Activated B cell treated with CpG ODN at 0.5 μM for 24 hours (primary cell): ENCODE measurements at regions of chr11 and their contacts with region 1.

Region 1: GRCh38 chr11:60831143-60831500 is 10.8 kb upstream of the CCDC86 start:
- DNase-seq: peak; percentile 69
- ATAC-seq: peak; percentile 95
- H3K4me3 Mint-ChIP-seq: no peak overlapping the region
- H3K27ac Mint-ChIP-seq: no peak overlapping the region
- H3K4me1 Mint-ChIP-seq: peaks cover 5% of the 10 kb centered on the region
- H3K27me3 Mint-ChIP-seq: peaks cover 8% of the 10 kb centered on the region
- CTCF ChIP-seq: peak; percentile 54

Region 2: GRCh38 chr11:60841797-60842667 is 10.9 kb after region 1 on chr11 and contains the start of gene CCDC86:
- CTCF ChIA-PET with region 1: interaction called, 14 read pairs
- POLR2A ChIA-PET with region 1: no interaction called
- intact Hi-C with region 1: no loop called
- DNase-seq: peak; percentile 100
- ATAC-seq: peak; percentile 96
- H3K4me3 Mint-ChIP-seq: peak within 1 kb of the TSS; percentile 83
- H3K27ac Mint-ChIP-seq: peak within 1 kb of the TSS; percentile 85
- H3K4me1 Mint-ChIP-seq: peaks cover 41% of the 10 kb centered on the region
- H3K27me3 Mint-ChIP-seq: no peaks in the 10 kb centered on the region
- CTCF ChIP-seq: no peak
- total RNA-seq, gene CCDC86: 30.3 and 30.6 TPM in 2 replicates

Region 3: GRCh38 chr11:60899046-60899936 is 68.2 kb after region 1 on chr11:
- CTCF ChIA-PET with region 1: interaction called, 34 read pairs
- POLR2A ChIA-PET with region 1: interaction called, 4 read pairs
- intact Hi-C with region 1: loop called (anchors 1 kb)
- DNase-seq: no peak
- ATAC-seq: peak; percentile 90
- H3K4me3 Mint-ChIP-seq: no peak overlapping the region
- H3K27ac Mint-ChIP-seq: no peak overlapping the region
- H3K4me1 Mint-ChIP-seq: peaks cover 10% of the 10 kb centered on the region
- H3K27me3 Mint-ChIP-seq: no peaks in the 10 kb centered on the region
- CTCF ChIP-seq: peak; percentile 95

Region 4: DNA sequence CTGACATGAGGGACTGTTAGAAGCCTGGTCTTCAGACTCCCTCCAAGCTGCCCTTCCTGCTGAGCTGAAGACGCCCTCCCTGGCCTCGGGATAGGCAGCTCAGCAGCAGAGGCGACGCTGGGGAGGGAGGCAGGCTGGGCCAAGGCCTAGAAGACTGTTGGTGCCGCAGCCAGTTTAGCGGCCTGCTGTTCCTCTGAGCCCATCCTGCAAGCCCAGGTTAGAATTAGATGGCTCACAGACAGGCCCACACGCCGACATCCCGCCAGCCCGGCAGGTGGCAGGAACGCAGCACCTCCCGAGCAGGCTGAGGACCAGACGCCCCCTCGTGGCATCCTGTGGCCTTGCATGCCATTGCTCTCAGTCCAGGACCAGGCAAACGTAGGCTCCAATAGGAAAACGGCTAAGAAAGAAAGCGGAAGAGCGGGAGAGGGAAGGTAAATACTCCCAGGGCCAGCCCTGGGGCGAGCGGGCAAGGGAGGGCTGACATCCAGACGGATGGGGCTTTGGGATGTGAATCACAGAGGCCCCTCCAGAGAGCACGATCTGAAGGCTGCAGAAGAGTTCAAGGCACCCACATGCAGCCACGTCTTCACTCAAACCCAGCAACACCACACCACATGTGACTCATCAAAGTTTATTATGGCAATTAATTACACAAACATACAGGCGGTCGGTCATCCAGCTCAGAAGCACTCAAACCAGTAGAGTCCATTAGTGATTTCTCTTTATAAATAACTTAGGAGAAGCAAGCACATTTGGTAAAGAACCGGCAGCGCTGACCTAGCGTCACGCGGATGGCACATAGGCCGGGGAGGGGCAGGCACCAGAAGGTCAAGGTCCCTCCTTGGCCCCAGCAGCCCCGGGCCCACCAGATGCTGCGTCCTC is 298.8 kb after region 1 on chr11:
- CTCF ChIA-PET with region 1: interaction called, 29 read pairs
- POLR2A ChIA-PET with region 1: interaction called, 4 read pairs
- intact Hi-C with region 1: loop called (anchors 1 kb)
- DNase-seq: peak; percentile 82
- ATAC-seq: peak; percentile 100
- H3K4me3 Mint-ChIP-seq: no peak overlapping the region
- H3K27ac Mint-ChIP-seq: peak overlapping the region; percentile 6
- H3K4me1 Mint-ChIP-seq: peaks cover 8% of the 10 kb centered on the region
- H3K27me3 Mint-ChIP-seq: no peaks in the 10 kb centered on the region
- CTCF ChIP-seq: peak; percentile 96

Region 5: GRCh38 chr11:61187505-61188130 is 356.5 kb after region 1 on chr11:
- CTCF ChIA-PET with region 1: interaction called, 47 read pairs
- POLR2A ChIA-PET with region 1: no interaction called
- intact Hi-C with region 1: loop called (anchors 1 kb)
- DNase-seq: peak; percentile 63
- ATAC-seq: peak; percentile 100
- H3K4me3 Mint-ChIP-seq: no peak overlapping the region
- H3K27ac Mint-ChIP-seq: no peak overlapping the region
- H3K4me1 Mint-ChIP-seq: peaks cover 4% of the 10 kb centered on the region
- H3K27me3 Mint-ChIP-seq: no peaks in the 10 kb centered on the region
- CTCF ChIP-seq: peak; percentile 98

Region 6: DNA sequence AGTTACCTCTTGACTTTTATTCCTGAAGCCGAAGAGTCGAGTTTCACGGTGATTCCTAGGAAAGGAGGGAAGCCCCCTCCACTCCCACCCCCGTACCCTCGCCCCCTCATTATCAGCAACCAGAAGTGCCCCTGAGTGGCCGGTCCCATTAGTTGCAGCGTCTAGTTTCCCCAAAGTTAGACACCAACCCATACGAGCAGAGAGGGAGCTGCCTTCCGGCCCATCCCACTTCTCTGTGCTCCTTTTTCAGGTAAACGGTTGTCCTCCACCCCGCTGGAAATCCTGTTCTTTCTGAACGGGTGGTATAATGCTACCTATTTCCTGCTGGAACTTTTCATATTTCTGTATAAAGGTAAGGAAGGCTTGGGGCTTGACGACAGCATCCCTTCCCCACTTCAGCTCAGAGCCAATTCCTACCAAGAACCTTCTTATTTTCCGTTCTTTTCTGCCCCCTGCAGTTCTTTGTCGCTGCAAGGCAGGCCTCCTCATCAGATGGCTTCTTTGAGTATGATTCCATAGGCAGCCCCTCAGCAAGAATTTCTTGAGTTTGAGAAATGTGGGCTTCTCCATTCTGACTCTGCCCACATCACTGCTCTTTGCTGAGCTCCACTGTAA is 562.0 kb after region 1 on chr11:
- CTCF ChIA-PET with region 1: interaction called, 4 read pairs
- POLR2A ChIA-PET with region 1: no interaction called
- intact Hi-C with region 1: loop called (anchors 2 kb)
- DNase-seq: no peak
- ATAC-seq: peak; percentile 42
- H3K4me3 Mint-ChIP-seq: peak overlapping the region; percentile 97
- H3K27ac Mint-ChIP-seq: peak overlapping the region; percentile 96
- H3K4me1 Mint-ChIP-seq: peaks cover 26% of the 10 kb centered on the region
- H3K27me3 Mint-ChIP-seq: no peaks in the 10 kb centered on the region
- CTCF ChIP-seq: no peak